AG04450 (cell line): ENCODE measurements at regions of chr19 and their contacts with region 1.

Region 1: DNA sequence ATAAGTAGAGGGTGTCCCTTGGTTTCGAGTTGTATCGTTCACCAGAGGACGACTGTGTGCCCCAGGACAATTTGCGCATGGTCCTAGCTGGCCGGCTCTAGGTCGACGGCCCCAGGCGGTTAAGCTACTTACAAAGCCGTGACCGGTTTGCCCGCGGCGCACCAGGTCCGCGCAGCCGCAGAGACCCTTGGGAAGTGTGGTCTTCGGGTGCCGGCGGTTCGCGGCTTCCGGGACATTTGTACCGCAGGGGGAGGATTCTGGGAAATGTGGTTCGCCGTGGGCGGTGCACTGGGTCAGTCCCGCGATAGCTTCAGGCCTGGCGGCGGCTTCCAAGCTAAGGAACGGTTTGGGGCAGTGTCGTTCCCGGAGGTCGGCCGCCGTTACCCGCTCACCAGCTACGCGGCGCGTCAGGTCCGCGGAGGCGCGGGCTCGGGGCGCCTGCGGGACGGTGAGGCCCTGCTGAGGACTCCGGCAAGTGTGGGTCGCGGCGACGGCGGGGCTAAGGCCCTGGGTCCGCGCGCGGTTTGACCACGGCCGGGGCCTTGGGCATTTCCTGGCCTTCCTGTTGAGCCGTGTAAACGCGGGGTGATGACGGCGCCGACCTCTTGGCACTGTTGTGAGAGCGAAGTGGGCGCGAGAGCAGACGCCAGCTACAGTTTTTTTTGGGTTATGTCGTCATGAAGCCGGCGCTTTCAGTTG is at the start of gene ZNF302:
- DNase-seq: peak; percentile 94
- H3K4me3 ChIP-seq: peak within 1 kb of the TSS; percentile 75
- H3K27ac ChIP-seq: peak within 1 kb of the TSS; percentile 87
- H3K27me3 ChIP-seq: no peaks in the 10 kb centered on the region
- CTCF ChIP-seq: no peak
- polyA plus RNA-seq, gene ZNF302: 21.6 and 29.1 TPM in 2 replicates

Region 2: GRCh38 chr19:34733826-34734600 is 56.5 kb after region 1 on chr19 and contains the start of gene ZNF181:
- CTCF ChIA-PET with region 1: no interaction called
- POLR2A ChIA-PET with region 1: interaction called, 17 read pairs
- DNase-seq: peak; percentile 63
- H3K4me3 ChIP-seq: peak within 1 kb of the TSS; percentile 82
- H3K27ac ChIP-seq: peak within 1 kb of the TSS; percentile 93
- H3K27me3 ChIP-seq: no peaks in the 10 kb centered on the region
- CTCF ChIP-seq: no peak
- polyA plus RNA-seq, gene ZNF181: 5.0 and 9.3 TPM in 2 replicates